Transverse colon (tissue), 4 donors: ENCODE measurements at regions of chr18 and their contacts with region 1.

Region 1: DNA sequence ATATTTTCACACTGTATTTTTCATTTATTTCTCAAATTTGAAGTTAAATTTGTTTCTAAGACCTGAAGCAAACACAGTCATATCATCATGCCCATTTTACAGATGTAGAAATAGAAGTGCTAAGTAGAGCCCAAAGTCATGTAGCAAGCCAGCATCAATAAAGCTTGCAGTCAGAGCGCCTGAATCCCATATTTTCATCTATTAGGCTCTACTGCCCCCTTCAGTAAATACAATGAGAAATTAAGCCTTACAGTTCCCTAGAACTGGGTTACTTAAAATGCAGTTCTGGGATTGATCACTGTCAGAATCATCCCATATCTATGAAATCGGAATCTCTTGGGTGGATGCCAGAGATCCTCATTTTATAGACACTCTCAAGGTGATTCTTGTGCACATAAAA is 419.9 kb downstream of the TGIF1 start:
- DNase-seq: no peak
- H3K4me3 ChIP-seq: no peak overlapping the region
- H3K27ac ChIP-seq: no peak overlapping the region
- H3K4me1 ChIP-seq: no peaks in the 10 kb centered on the region
- H3K27me3 ChIP-seq: no peaks in the 10 kb centered on the region
- CTCF ChIP-seq: peak; percentile 23 to 40 (median 37)
- EP300 ChIP-seq: no peak
- POLR2A ChIP-seq: no peak

Region 2: DNA sequence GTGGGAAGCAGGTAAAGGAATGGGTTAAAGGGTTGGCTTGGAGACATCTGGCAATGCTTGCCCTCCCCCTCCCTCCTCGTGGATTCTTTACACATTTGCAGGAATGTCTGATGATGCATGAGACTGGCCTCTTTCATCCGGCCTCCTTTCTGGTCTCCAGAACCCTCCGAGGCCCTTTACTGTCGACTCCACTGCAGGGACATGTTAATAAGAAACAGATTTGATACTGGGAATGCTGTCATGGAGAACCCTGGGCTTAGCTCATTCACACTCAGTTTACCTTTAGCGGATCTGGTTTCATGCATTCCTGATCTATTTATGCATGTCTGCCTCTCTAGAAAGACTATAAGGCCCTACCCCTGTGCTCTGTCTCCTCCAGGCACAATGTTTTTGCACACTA is 181.1 kb before region 1 on chr18:
- in situ Hi-C with region 1: loop called in 1 of 4 experiments (anchors 25 kb)
- intact Hi-C with region 1: no loop called
- DNase-seq: no peak
- H3K4me3 ChIP-seq: no peak overlapping the region
- H3K27ac ChIP-seq: no peak overlapping the region
- H3K4me1 ChIP-seq: peaks cover 0 to 10% (median 0%) of the 10 kb centered on the region in 4 donors
- H3K27me3 ChIP-seq: no peaks in the 10 kb centered on the region
- CTCF ChIP-seq: no peak
- EP300 ChIP-seq: no peak
- POLR2A ChIP-seq: no peak

Region 3: DNA sequence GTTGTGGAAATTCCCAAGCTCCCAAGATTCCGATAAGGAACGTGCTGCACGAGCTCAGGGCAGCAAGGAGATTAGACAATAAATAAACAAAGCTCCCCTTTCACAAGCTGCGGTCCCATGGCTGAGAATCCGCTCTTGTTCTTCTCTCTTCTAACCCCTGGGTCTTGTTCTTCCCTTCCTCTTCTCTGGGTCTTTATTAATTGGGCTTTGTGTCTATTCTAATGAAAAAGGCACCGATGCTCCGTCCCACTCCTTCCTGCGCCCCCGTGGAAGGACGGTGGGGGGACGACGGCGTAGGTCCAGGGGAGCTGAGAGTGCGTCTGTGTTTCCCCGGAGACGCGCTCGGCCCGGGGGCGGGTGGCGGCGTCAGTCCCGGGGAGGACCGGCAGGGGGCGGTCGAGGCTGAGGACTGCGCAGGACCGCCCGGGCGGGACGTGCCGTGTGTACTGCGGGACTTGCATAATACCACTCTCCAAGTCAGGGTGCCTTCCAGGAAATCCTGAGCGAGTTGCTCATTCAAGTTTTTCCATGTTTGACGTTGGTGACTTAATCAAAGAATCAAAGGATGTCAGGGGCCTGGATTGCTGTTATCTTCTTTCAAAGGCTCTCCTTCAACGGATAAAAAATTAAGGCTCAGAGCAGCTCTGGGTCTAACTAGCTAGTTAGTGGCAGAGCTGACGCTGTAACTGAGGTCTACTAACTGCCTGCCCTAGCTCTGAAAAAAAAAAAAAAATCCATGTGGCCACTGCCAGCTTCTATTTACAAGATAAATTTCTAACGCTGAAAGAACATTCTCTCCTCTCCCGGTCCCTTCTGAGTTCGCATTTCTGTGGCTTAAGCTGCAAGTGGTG is 98.5 kb before region 1 on chr18:
- in situ Hi-C with region 1: no loop called
- intact Hi-C with region 1: loop called (anchors 2 kb)
- DNase-seq: peak; percentile 85
- H3K4me3 ChIP-seq: peak overlapping the region in 3 of 4 donors; percentile 13 to 39 (median 15)
- H3K27ac ChIP-seq: peak overlapping the region; percentile 17 to 71 (median 50)
- H3K4me1 ChIP-seq: peaks cover 0 to 13% (median 6%) of the 10 kb centered on the region in 4 donors
- H3K27me3 ChIP-seq: peaks cover 2% of the 10 kb centered on the region
- CTCF ChIP-seq: peak; percentile 91 to 96 (median 96)
- EP300 ChIP-seq: no peak
- POLR2A ChIP-seq: no peak